GM13977 (cell line): ENCODE measurements at regions of chr18 and their contacts with region 1.

Region 1: GRCh38 chr18:46660955-46661749 is 4.1 kb upstream of the LOXHD1 start:
- DNase-seq: no peak
- CTCF ChIP-seq: no peak

Region 2: DNA sequence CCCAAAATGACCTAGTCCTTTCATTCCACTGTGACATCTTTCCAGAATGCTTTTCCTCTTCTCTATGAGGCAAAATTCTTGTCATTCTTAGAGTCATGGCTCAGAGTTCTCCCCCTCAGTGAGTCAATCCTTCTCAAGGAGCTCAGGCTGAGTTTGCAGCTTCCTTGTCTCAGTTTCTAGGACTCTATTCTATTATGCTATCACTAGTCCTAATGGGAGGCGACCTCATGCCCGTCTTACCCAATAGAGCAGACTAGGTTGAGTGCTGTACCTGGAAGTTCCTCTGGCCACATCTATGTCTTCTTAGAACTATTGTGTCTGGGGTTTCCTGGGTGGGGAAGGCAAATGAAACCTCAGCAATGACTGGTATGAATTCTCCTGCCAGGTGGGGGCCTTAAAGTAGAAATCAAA is 505.5 kb before region 1 on chr18:
- in situ Hi-C with region 1: loop called (anchors 10 kb)
- DNase-seq: no peak
- CTCF ChIP-seq: no peak

Region 3: DNA sequence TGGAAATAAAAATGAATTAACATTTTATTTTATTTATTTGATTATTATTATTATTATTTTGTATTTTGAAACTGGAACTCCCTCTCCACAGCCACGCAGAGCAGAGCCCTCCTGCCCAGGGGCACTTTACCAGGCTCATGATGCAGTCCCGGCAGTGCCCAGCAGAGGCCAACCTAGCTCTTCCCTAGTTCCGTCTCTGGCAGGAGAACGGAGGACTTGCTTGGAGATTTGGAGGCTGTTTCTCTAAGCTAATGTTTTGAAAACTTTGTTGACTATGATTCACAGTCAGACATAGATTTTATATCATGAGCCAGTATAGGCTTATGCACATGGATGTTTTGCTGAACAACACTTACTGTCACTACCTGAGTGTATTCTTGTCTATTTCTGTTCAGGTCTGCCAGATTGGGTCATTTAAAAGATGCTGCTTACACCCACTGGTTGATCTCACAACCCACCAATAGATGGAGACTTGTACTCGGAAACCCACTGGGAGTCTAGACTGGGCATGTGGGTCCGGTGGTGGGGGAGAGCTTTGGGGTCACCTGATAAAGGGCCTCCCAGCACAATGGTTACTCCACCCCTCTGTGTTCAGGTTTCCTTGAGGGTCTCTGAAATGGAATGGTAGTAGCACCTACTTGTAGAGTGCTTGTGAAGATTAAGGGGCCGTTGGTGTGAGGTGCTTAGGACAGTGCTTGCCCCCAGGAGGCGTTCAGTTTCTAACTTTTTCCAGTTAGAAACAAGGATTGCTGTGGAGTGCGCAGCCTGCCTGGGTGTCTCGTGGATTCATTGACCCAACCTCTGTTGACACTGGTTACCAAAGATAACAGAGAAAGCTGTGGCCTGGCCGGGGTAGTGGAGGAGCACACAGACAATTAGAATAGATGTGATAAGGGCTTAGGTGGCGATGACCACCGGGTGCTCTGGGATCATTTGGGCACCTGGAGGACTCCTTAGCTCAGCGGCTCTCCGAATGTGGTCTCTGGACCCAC is 379.7 kb before region 1 on chr18:
- in situ Hi-C with region 1: loop called (anchors 5 kb)
- DNase-seq: peak; percentile 53
- CTCF ChIP-seq: peak; percentile 93